HepG2 (cell line): ENCODE measurements at regions of chr4 and their contacts with region 1.

Region 1: DNA sequence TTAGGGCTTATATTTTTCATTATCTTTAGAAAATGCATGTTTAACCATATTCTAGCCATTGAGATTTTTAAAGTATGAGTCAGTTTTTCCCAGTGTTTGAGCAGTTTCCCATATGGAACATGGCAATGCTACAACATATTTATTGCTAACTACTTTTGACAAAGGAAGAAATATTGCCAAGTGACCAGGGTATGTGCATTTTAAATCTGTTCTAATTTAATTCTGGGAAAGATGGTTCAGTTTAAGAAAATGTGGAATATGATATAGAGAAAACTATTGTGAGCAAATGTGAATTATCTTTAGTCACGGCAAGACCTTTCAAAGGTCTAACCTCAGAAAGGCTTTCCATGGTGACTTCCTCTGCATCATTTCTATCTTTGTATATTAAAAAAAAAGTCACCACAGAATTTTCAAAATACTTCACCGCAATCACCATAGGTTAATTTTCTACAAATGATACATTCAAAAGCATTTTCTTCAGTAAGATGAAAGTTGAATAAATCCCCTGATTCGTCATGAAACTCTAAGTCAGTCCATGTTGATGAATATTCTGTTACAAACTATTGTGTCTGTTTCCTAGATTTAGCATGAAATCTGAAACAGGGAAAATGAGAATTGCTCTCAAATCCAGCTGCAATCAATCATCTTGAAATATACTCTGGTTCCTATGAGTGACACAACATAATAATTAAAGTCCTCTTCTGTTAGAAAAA is 2349.0 kb upstream of the TENM3 start:
- DNase-seq: no peak
- ATAC-seq: no peak
- H3K4me3 ChIP-seq: no peak overlapping the region
- H3K27ac ChIP-seq: no peak overlapping the region
- H3K4me1 ChIP-seq: no peaks in the 10 kb centered on the region
- H3K27me3 ChIP-seq: no peaks in the 10 kb centered on the region
- CTCF ChIP-seq: no peak
- EP300 ChIP-seq: no peak
- POLR2A ChIP-seq: no peak
- RAD21 ChIP-seq: no peak

Region 2: DNA sequence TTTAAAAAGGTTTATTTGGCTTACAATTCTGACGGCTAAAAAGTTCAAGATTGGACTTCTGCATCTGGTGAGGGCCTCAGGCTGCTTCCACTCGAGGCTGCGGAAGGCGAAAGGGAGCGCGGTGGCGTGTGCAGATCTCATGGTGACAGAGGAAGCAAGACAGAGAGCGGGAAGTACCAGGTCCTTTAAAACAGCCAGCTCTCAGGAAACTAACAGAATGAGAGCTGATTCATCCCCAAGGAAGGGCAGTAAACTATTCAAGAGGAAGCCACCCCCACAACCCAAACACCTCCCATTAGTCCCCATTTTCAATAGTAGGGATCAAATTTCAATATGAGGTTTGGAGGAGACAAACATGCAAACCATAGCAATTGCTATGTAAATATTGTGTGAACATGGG is 307.8 kb before region 1 on chr4:
- CTCF ChIA-PET with region 1: no interaction called
- POLR2A ChIA-PET with region 1: no interaction called
- in situ Hi-C with region 1: no loop called
- intact Hi-C with region 1: no loop called
- DNase-seq: no peak
- ATAC-seq: no peak
- H3K4me3 ChIP-seq: no peak overlapping the region
- H3K27ac ChIP-seq: no peak overlapping the region
- H3K4me1 ChIP-seq: no peaks in the 10 kb centered on the region
- H3K27me3 ChIP-seq: no peaks in the 10 kb centered on the region
- CTCF ChIP-seq: no peak
- EP300 ChIP-seq: no peak
- POLR2A ChIP-seq: no peak
- RAD21 ChIP-seq: no peak

Region 3: DNA sequence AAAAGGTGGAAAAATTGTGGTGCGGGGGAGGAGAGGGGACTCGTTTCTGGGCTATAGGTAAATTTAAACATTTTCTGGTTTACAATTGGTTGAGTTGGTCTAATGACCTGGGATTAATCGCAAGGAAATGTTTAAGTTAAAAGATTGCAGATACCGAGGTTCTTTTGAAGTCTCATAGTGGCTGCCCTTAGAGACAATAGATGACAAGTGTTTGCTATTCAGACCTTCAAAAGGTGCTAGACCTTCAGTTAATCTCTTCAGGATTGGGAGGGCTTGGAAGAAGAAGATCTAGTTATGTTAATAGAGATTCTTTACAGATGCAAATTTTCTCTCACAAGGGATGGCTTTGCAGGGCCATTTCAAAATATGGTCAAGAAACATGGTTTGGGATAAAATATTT is 165.9 kb before region 1 on chr4:
- CTCF ChIA-PET with region 1: no interaction called
- POLR2A ChIA-PET with region 1: no interaction called
- in situ Hi-C with region 1: no loop called
- intact Hi-C with region 1: no loop called
- DNase-seq: no peak
- ATAC-seq: no peak
- H3K4me3 ChIP-seq: no peak overlapping the region
- H3K27ac ChIP-seq: no peak overlapping the region
- H3K4me1 ChIP-seq: no peaks in the 10 kb centered on the region
- H3K27me3 ChIP-seq: no peaks in the 10 kb centered on the region
- CTCF ChIP-seq: no peak
- EP300 ChIP-seq: no peak
- POLR2A ChIP-seq: no peak
- RAD21 ChIP-seq: no peak

Region 4: DNA sequence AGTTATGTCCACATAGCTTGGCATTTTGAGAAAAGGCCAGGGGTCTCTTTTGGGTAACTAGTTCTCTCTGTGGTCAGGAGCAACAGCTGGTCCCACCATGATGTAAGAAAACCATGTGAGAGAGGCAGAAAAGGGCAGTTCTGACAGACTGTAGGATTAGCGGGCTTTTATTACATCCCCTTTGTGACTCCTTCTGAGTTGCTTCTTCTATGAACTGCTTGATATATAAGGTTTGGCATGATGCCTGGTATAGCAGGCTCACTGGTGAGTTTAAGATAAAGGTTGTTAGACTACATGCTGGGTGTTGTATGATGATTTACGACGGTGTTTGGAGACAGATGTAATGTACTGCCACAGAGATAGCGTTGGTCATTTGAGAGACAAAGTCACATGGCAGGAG is 143.8 kb before region 1 on chr4:
- CTCF ChIA-PET with region 1: no interaction called
- POLR2A ChIA-PET with region 1: no interaction called
- in situ Hi-C with region 1: no loop called
- intact Hi-C with region 1: no loop called
- DNase-seq: no peak
- ATAC-seq: no peak
- H3K4me3 ChIP-seq: no peak overlapping the region
- H3K27ac ChIP-seq: no peak overlapping the region
- H3K4me1 ChIP-seq: no peaks in the 10 kb centered on the region
- H3K27me3 ChIP-seq: no peaks in the 10 kb centered on the region
- CTCF ChIP-seq: no peak
- EP300 ChIP-seq: no peak
- POLR2A ChIP-seq: no peak
- RAD21 ChIP-seq: no peak

Region 5: GRCh38 chr4:179981161-179981560 is 86.9 kb after region 1 on chr4:
- CTCF ChIA-PET with region 1: no interaction called
- POLR2A ChIA-PET with region 1: no interaction called
- in situ Hi-C with region 1: no loop called
- intact Hi-C with region 1: loop called (anchors 5 kb)
- DNase-seq: no peak
- ATAC-seq: no peak
- H3K4me3 ChIP-seq: no peak overlapping the region
- H3K27ac ChIP-seq: no peak overlapping the region
- H3K4me1 ChIP-seq: no peaks in the 10 kb centered on the region
- H3K27me3 ChIP-seq: no peaks in the 10 kb centered on the region
- CTCF ChIP-seq: no peak
- EP300 ChIP-seq: no peak
- POLR2A ChIP-seq: no peak
- RAD21 ChIP-seq: no peak